ENCODE measurements at regions of chr11 and their contacts with region 1.

Region 1: DNA sequence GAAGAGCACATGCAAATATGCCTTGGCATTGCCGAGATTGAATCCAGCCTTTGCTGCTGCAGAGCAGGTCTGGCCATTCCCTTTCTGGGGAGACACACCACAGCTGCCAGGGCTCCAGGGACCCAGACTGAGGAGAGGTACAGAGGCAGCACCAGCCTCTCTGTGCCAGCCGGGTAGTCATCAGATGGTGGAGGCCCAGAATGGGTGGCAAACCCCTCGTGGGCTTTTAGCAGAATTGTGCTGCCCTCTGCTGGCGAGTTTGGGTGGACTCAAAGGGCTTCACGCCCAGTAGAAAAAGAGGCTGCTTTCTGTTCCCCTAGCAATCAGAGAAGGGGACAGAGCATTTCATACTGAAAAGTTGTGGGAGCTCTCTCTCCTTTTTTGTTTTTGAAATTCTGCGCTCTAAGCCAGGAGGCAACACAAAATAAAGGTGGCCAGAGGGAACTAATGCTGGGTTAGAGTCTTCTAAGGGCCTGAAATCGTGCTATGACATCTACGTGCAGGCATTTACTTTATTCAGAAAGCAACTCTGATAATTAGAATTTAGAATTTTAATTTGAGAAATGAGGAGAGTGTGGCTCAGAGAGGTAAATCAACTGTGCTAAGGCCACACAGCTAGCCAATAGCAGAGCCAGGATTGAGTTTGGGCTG is 158.8 kb upstream of the NAV2 start:
- DNase-seq: peak; percentile 49
- ATAC-seq: peak; percentile 83
- H3K4me3 ChIP-seq: no peak overlapping the region
- H3K27ac ChIP-seq: no peak overlapping the region
- H3K4me1 ChIP-seq: no peaks in the 10 kb centered on the region
- H3K27me3 ChIP-seq: peaks cover 1 to 10% of the 10 kb centered on the region in 2 experiments; a peak in 4 of 5 replicates
- CTCF ChIP-seq: peak; percentile 89
- EP300 ChIP-seq: no peak
- POLR2A ChIP-seq: no peak
- RAD21 ChIP-seq: peak; percentile 86

Region 2: DNA sequence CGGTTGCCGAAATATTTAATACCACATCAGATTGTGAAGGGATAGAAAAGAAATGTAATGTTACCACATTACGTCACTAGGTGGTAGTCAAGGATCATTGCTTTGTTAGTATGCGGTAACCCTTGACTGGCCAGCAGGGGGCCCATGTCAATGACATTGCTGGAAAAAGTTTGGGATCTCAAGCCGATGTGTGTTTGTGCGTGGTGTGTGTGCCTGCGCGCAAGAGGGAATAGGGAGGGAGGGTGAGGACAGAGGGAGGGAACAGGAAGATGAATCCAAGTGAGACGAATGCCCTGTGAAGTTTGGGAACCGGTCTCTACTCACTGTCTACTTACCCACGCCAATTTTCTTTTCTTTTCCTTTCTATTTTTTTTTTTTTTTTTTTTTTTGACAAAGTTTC is 482.6 kb before region 1 on chr11:
- CTCF ChIA-PET with region 1: interaction called, 16 read pairs
- POLR2A ChIA-PET with region 1: no interaction called
- in situ Hi-C with region 1: loop called (anchors 5 kb)
- intact Hi-C with region 1: loop called (anchors 1 kb)
- DNase-seq: peak; percentile 78
- ATAC-seq: peak; percentile 93
- H3K4me3 ChIP-seq: peak overlapping the region in 1 of 3 experiments; percentile 16; a peak in 1 of 6 replicates
- H3K27ac ChIP-seq: no peak overlapping the region
- H3K4me1 ChIP-seq: no peaks in the 10 kb centered on the region
- H3K27me3 ChIP-seq: peaks cover 2 to 19% of the 10 kb centered on the region in 2 experiments; a peak in 3 of 5 replicates
- CTCF ChIP-seq: peak; percentile 97
- EP300 ChIP-seq: no peak
- POLR2A ChIP-seq: no peak
- RAD21 ChIP-seq: peak; percentile 80

Region 3: DNA sequence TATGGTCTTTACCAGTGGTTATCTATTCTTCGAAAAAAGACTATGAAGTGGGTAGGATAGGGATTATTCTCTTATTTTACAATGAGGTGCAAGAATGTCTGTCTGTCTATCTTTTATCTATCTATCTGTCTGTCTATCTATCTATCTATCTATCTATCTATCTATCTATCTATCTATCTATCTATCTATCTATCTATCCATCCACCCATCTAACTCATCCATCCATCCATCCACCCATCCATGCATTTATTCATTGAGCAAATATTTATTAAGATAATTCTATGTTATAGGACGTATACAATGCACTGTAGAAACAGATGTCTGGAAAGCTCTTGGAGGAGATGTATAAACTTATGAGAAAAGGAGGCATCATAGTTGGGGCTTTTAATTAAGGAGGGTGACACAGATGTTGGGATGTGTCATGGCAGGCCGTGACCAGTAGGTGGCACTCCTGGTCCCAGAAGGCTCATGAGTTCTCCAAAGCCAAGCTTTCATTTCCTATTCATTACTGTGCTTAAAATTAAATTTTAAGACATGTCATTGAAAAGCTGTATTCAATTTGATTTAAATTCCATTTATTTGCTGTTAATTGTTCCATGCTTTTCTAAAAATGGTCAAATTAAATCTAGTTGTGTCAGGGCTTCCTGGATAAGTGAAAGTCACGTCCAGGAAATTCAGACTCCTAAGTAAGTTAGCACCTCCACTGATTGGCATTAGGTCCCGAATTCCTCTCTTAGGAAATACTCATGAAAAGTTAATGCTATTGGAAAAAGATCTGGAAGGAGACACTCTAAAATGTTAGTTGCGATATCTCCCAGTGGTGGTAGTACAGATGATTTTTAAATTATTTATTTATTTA is 294.1 kb before region 1 on chr11:
- CTCF ChIA-PET with region 1: interaction called, 19 read pairs
- POLR2A ChIA-PET with region 1: no interaction called
- in situ Hi-C with region 1: no loop called
- intact Hi-C with region 1: loop called (anchors 2 kb)
- DNase-seq: no peak
- ATAC-seq: peak; percentile 67
- H3K4me3 ChIP-seq: no peak overlapping the region
- H3K27ac ChIP-seq: no peak overlapping the region
- H3K4me1 ChIP-seq: no peaks in the 10 kb centered on the region
- H3K27me3 ChIP-seq: peaks cover 0 to 6% of the 10 kb centered on the region in 2 experiments; a peak in 2 of 5 replicates
- CTCF ChIP-seq: peak; percentile 69
- EP300 ChIP-seq: no peak
- POLR2A ChIP-seq: no peak
- RAD21 ChIP-seq: peak; percentile 27; the same call in 1 of the 2 replicates

Region 4: GRCh38 chr11:19311308-19312030 is 242.3 kb before region 1 on chr11:
- CTCF ChIA-PET with region 1: interaction called, 34 read pairs
- POLR2A ChIA-PET with region 1: no interaction called
- in situ Hi-C with region 1: loop called (anchors 5 kb)
- intact Hi-C with region 1: loop called (anchors 1 kb)
- DNase-seq: peak; percentile 23
- ATAC-seq: peak; percentile 96
- H3K4me3 ChIP-seq: no peak overlapping the region
- H3K27ac ChIP-seq: no peak overlapping the region
- H3K4me1 ChIP-seq: no peaks in the 10 kb centered on the region
- H3K27me3 ChIP-seq: peaks cover 0 to 22% of the 10 kb centered on the region in 2 experiments; a peak in 2 of 5 replicates
- CTCF ChIP-seq: peak; percentile 76
- EP300 ChIP-seq: no peak
- POLR2A ChIP-seq: no peak
- RAD21 ChIP-seq: peak; percentile 27; the same call in 1 of the 2 replicates

Region 5: DNA sequence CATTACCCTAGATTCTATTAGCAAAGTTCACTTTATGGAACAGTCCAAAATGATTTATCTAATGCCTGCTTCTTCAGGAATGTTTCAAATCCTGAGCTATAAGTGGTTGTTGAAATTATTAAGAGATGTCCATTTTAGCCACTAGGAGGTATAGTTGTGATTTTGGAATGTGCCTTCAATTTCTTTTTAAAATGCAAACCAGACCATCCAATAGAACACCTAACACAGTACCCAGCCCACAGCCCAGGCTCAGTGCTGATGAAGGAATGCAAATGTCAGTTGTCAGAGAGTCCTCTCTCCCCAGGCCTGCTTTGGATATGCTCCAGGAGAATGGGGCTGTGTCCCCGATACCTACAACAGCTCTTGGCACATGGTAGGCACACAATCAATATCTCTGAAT is 227.3 kb before region 1 on chr11:
- CTCF ChIA-PET with region 1: no interaction called
- POLR2A ChIA-PET with region 1: no interaction called
- in situ Hi-C with region 1: no loop called
- intact Hi-C with region 1: loop called (anchors 1 kb)
- DNase-seq: no peak
- ATAC-seq: no peak
- H3K4me3 ChIP-seq: no peak overlapping the region
- H3K27ac ChIP-seq: no peak overlapping the region
- H3K4me1 ChIP-seq: no peaks in the 10 kb centered on the region
- H3K27me3 ChIP-seq: peaks cover 0 to 5% of the 10 kb centered on the region in 2 experiments; a peak in 2 of 5 replicates
- CTCF ChIP-seq: no peak
- EP300 ChIP-seq: no peak
- POLR2A ChIP-seq: no peak
- RAD21 ChIP-seq: no peak

Region 6: GRCh38 chr11:19742588-19743292 is 188.9 kb after region 1 on chr11:
- CTCF ChIA-PET with region 1: interaction called, 11 read pairs
- POLR2A ChIA-PET with region 1: no interaction called
- in situ Hi-C with region 1: no loop called
- intact Hi-C with region 1: no loop called
- DNase-seq: peak; percentile 52
- ATAC-seq: peak; percentile 95
- H3K4me3 ChIP-seq: no peak overlapping the region
- H3K27ac ChIP-seq: no peak overlapping the region
- H3K4me1 ChIP-seq: no peaks in the 10 kb centered on the region
- H3K27me3 ChIP-seq: peaks cover 0 to 20% of the 10 kb centered on the region in 2 experiments; a peak in 3 of 5 replicates
- CTCF ChIP-seq: peak; percentile 89
- EP300 ChIP-seq: no peak
- POLR2A ChIP-seq: no peak
- RAD21 ChIP-seq: peak; percentile 74

Measured in HepG2 (cell line).